Activated CD4-positive, alpha-beta T cell treated with anti-CD3 and anti-CD28 coated beads, Interleukin-2, amount 10 ng/mL, durations not matched to agents 24 days and 14 days (primary cell): ENCODE measurements at regions of chr21 and their contacts with region 1.

Region 1: GRCh38 chr21:33479679-33480480 is at the start of gene TMEM50B:
- DNase-seq: peak; percentile 98
- H3K4me3 Mint-ChIP-seq: peak within 1 kb of the TSS; percentile 93
- H3K27ac Mint-ChIP-seq: peak within 1 kb of the TSS; percentile 93
- H3K4me1 Mint-ChIP-seq: peaks cover 15% of the 10 kb centered on the region
- H3K27me3 Mint-ChIP-seq: peaks cover 14% of the 10 kb centered on the region
- total RNA-seq, gene TMEM50B: 14.4 and 16.4 TPM in 2 replicates

Region 2: DNA sequence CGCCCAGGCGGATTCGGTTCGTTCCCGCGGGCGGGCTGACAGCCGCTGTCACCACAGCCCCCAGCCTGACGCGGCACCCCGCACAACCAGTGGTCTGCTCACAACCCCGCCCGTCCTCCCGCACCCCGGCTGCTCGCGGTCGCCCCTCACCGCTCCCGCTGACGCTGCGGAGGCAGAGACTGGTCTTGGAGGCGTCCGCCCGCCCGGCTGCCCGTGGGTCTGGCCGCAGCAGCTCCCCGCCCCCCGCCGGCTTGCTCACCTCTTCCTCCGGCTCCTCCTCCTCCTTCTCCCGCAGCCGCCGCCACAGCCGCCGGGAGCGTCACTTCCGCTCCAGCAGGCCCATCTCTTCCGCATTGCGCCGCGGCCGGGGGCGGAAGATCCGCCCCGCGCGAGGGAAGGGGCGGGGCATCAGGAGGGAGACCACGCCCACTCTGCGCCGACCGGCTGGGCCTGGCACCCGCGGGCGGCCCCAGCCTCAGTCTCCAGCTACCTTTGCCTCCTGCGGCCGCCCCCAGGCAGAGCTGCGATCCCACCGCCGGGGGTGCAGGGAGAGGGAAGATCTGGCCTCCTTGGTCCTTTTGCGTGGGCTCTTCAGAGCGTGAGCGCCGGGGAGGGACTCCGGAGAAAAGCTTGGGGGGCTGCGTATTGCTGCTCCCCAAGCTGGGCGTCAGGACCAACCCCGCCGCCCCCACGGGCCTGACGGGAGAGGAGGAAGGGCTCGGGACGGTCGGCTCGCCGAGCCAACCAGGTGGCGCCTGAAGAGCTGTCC is 752.0 kb before region 1 on chr21 and contains the start of gene SYNJ1:
- intact Hi-C with region 1: loop called (anchors 5 kb)
- DNase-seq: peak; percentile 98
- H3K4me3 Mint-ChIP-seq: peak within 1 kb of the TSS; percentile 90
- H3K27ac Mint-ChIP-seq: peak within 1 kb of the TSS; percentile 93
- H3K4me1 Mint-ChIP-seq: peaks cover 30% of the 10 kb centered on the region
- H3K27me3 Mint-ChIP-seq: no peaks in the 10 kb centered on the region
- total RNA-seq, gene SYNJ1: 11.3 and 12.6 TPM in 2 replicates

Region 3: DNA sequence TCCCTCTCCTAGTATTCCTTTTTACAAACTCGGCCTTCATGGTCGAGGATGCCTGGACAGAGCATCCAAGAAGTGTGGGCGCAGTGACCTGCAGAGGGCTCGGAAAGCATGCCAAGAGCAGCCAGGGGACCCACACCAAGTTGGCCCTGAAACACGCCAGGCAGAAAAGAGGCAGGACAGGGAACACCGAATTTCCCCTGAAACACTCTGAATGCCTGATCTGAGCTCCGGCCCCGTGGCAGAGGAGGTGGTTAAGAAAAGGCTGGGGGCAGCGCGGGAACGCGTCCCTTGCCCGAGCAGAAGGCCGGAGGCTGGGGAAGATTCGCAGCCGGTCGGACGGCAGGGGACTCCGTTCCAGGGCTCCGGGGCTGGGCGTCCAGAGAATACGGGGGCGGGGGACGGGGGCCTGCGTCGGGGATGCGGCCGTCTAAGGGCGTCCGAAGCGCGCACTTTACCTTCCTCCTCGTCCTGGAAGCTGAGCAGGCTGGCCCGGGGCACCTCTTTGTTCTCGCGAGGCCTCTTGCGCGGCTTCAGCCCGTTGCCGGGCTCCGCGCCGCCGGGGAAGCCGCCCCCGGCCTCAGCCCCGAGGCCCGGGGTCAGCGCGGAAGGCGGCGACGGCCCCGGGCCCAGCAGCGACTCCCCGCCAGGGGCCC is 708.9 kb before region 1 on chr21:
- intact Hi-C with region 1: loop called (anchors 10 kb)
- DNase-seq: peak; percentile 88
- H3K4me3 Mint-ChIP-seq: peak overlapping the region; percentile 99
- H3K27ac Mint-ChIP-seq: peak overlapping the region; percentile 92
- H3K4me1 Mint-ChIP-seq: peaks cover 46% of the 10 kb centered on the region
- H3K27me3 Mint-ChIP-seq: peaks cover 3% of the 10 kb centered on the region

Region 4: GRCh38 chr21:33403128-33403778 is 76.6 kb before region 1 on chr21 and contains the start of gene IFNGR2:
- intact Hi-C with region 1: no loop called
- DNase-seq: peak; percentile 83
- H3K4me3 Mint-ChIP-seq: peak within 1 kb of the TSS; percentile 87
- H3K27ac Mint-ChIP-seq: peak within 1 kb of the TSS; percentile 85
- H3K4me1 Mint-ChIP-seq: peaks cover 31% of the 10 kb centered on the region
- H3K27me3 Mint-ChIP-seq: peaks cover 40% of the 10 kb centered on the region
- total RNA-seq, gene IFNGR2: 8.5 and 9.9 TPM in 2 replicates

Region 5: DNA sequence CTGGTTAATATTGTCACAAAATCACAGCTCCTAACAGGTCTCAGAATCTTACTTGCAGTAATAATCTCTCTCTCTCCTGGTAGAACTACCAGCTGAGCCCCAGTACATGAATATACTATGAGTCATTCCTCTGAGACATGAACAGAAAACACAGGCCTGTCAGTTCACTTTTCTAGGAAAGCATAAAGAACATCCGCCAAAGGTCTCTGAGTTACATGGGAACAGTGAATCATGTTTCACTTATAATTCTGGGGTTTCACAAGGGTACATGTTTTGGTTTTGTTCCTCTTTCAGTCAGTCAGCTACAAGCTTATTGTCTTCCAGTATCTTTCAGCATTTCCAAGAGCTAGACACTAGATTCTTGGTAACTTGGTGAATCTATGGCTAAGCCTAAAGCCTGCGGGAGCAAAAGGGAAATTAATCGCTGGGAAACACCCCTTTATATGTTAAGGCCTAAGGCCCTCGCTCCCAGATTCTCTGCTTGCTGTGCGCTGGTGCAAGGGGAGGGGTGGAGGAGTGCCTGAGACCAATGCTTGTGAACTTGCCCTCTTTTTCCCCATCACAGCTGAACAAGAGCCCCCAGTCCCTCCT is 45.0 kb before region 1 on chr21:
- intact Hi-C with region 1: loop called (anchors 2 kb)
- DNase-seq: peak; percentile 81
- H3K4me3 Mint-ChIP-seq: peak overlapping the region; percentile 71
- H3K27ac Mint-ChIP-seq: peak overlapping the region; percentile 86
- H3K4me1 Mint-ChIP-seq: peaks cover 24% of the 10 kb centered on the region
- H3K27me3 Mint-ChIP-seq: no peaks in the 10 kb centered on the region

Region 6: DNA sequence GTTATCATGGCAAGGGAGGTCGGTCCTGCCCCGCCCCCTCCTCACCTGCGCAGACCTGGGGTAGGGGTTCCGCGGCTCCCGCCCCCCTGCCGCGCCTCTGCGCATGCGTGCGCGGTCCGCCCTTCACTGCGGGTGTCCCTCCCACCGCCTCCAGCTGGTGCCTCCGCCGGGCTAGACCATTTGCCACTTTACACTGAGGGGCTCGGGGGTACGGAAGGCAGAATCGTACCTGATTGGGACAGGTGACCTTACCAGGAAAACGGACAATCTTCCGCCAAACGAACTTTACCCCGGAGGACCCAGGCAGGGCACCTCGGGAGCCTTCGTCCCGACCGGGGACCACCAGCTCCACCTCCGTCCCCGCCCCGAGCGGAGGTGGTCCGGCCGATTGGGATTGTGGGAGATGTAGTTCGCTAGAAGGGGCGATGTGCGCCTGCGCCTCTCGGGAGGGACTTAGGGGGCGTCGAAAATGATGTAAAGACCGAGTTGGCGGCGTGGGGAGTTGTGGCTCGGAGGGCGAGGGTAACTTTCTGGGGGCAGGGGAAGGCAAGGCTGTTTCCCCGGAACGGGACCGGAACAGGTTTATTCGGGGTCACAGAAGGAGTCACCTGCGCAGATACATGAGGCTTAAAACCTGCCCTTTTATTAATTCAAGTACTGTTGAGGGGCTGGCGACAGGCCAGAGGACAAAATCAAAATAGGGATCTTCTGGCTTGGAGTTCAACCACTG is 11.7 kb after region 1 on chr21 and contains the start of gene DNAJC28:
- intact Hi-C with region 1: loop called (anchors 1 kb)
- DNase-seq: peak; percentile 98
- H3K4me3 Mint-ChIP-seq: peak within 1 kb of the TSS; percentile 84
- H3K27ac Mint-ChIP-seq: peak within 1 kb of the TSS; percentile 72
- H3K4me1 Mint-ChIP-seq: peaks cover 10% of the 10 kb centered on the region
- H3K27me3 Mint-ChIP-seq: peaks cover 18% of the 10 kb centered on the region
- total RNA-seq, gene DNAJC28: 0.09 and 0.12 TPM in 2 replicates

Region 7: GRCh38 chr21:33542640-33543504 is 63.0 kb after region 1 on chr21 and contains the start of gene SON:
- intact Hi-C with region 1: loop called (anchors 1 kb)
- DNase-seq: peak; percentile 99
- H3K4me3 Mint-ChIP-seq: peak within 1 kb of the TSS; percentile 95
- H3K27ac Mint-ChIP-seq: peak within 1 kb of the TSS; percentile 100
- H3K4me1 Mint-ChIP-seq: peaks cover 34% of the 10 kb centered on the region
- H3K27me3 Mint-ChIP-seq: no peaks in the 10 kb centered on the region
- total RNA-seq, gene SON: 351 and 363 TPM in 2 replicates

Region 8: DNA sequence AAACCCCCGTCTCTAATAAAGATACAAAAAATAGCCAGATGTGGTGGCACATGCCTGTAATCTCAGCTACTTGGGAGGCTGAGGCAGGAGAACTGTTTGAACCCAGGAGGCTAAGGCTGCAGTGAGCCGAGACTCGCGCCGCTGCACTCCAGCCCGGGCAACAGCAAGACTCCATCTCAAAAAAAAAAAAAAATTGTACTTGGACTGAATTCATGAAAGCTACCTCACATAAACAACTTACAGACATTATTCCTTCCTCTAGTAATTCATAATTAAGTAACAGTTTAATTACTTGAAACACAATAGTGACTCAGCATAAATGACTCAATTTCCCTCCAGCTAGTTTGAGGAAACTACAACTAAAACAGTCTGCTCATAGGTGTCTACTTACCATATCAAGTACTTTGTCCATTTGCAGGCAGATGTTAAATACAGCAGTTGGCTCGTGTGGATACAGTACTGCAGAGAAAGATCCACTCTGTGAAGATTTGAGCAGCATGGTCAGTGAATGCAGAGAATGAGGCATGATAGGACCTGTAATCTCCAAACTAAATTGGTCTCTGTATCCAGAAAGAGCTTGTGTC is 99.2 kb after region 1 on chr21:
- intact Hi-C with region 1: no loop called
- DNase-seq: no peak
- H3K4me3 Mint-ChIP-seq: no peak overlapping the region
- H3K27ac Mint-ChIP-seq: peak overlapping the region; percentile 41
- H3K4me1 Mint-ChIP-seq: peaks cover 6% of the 10 kb centered on the region
- H3K27me3 Mint-ChIP-seq: no peaks in the 10 kb centered on the region

Region 9: GRCh38 chr21:34187935-34188334 is 708.1 kb after region 1 on chr21:
- intact Hi-C with region 1: no loop called
- DNase-seq: no peak
- H3K4me3 Mint-ChIP-seq: no peak overlapping the region
- H3K27ac Mint-ChIP-seq: no peak overlapping the region
- H3K4me1 Mint-ChIP-seq: peaks cover 27% of the 10 kb centered on the region
- H3K27me3 Mint-ChIP-seq: no peaks in the 10 kb centered on the region